Activated CD4-positive, alpha-beta memory T cell treated with anti-CD3 and anti-CD28 coated beads for 36 hours (primary cell): ENCODE measurements at regions of chr2 and their contacts with region 1.

Region 1: GRCh38 chr2:178112202-178113152 is at the start of gene RBM45:
- DNase-seq: peak; percentile 91
- H3K4me3 Mint-ChIP-seq: peak within 1 kb of the TSS; percentile 95
- H3K27ac Mint-ChIP-seq: peak within 1 kb of the TSS; percentile 74
- H3K4me1 Mint-ChIP-seq: peaks cover 36% of the 10 kb centered on the region
- H3K27me3 Mint-ChIP-seq: no peaks in the 10 kb centered on the region
- total RNA-seq, gene RBM45: 12.2 to 12.5 TPM

Region 2: GRCh38 chr2:177872286-177872685 is 240.2 kb before region 1 on chr2:
- CTCF ChIA-PET with region 1: no interaction called
- POLR2A ChIA-PET with region 1: no interaction called
- intact Hi-C with region 1: no loop called
- DNase-seq: no peak
- H3K4me3 Mint-ChIP-seq: no peak overlapping the region
- H3K27ac Mint-ChIP-seq: no peak overlapping the region
- H3K4me1 Mint-ChIP-seq: no peaks in the 10 kb centered on the region
- H3K27me3 Mint-ChIP-seq: no peaks in the 10 kb centered on the region

Region 3: DNA sequence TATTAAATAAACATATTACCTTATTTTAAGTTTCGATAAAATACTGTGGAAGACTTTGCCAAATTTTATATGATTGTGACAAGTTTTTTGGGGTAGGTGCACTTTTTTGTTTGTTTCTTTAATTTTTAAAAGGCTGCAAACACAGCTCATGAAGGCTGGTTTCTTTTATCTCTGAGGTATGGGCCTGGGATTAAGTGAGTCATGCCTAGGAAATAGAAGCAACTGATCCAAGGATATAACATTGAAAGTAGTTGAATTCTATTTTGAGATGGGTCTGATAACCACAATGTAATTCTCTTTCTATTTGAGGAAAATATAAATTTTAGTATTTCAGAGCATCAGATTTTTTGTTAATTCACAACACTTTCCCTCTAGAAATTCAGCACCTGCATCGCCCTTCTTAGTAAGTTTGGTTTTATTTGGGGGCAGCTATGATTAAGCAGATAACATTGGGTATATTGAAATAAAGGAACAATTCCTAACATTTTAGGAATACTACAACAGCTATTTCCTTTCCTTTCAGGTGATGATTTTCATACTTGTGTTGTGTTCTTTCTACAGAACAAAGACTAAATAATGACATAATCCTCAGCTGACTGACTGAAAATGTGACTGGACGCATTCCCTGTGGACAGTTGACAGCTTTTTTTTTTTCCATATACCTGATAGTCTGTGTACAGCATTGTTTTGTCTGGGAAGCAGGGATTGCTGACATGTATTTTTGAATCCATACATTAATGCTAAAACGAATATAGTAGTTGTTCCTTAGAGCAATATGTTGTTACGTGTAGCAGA is 16.6 kb after region 1 on chr2:
- CTCF ChIA-PET with region 1: interaction called, 14 read pairs
- POLR2A ChIA-PET with region 1: interaction called, 3 read pairs
- intact Hi-C with region 1: no loop called
- DNase-seq: no peak
- H3K4me3 Mint-ChIP-seq: no peak overlapping the region
- H3K27ac Mint-ChIP-seq: no peak overlapping the region
- H3K4me1 Mint-ChIP-seq: no peaks in the 10 kb centered on the region
- H3K27me3 Mint-ChIP-seq: no peaks in the 10 kb centered on the region

Region 4: DNA sequence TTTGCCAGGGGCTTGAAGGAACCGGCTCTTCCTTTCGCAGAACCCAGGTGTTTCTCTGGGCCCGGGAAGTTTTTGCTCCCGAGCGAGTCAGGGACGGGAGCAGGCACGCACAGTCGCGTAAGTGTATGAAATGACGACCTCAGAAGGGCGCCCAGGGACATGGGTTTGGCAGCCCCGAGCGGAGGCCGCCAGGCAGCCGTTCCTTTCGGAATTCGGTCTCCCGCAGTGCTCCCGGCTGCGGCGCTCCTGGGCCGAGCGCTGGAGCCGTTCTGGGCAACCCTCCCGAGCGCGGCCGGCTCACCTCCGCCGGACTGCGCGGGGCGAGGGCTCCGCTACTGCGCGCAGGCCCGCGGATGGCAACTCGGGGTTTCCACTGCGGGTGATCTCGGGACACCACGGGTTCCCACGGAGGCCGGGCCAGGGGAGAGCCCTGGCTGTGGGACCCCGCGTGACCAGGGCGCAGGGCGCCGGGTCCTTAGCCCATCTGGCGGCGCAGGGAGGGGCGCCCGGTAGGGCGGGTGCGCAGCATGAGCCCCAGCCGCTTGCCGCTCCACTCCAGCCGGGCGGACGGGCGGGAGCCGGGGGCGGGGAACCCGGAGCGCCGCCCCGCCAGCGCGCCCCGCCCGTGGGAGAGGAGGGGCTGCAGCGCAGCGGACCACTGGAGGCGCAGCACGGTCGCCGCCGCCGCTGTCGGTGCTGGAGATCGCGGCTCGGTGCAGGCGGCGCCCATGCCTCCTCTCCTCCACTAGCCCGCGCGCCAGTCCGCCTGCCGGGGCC is 81.5 kb after region 1 on chr2 and contains the start of gene OSBPL6:
- CTCF ChIA-PET with region 1: interaction called, 4 read pairs
- POLR2A ChIA-PET with region 1: no interaction called
- intact Hi-C with region 1: loop called (anchors 2 kb)
- DNase-seq: peak; percentile 74
- H3K4me3 Mint-ChIP-seq: peak within 1 kb of the TSS; percentile 66
- H3K27ac Mint-ChIP-seq: no peak within 1 kb of the TSS
- H3K4me1 Mint-ChIP-seq: peaks cover 9% of the 10 kb centered on the region
- H3K27me3 Mint-ChIP-seq: peaks cover 51% of the 10 kb centered on the region
- total RNA-seq, gene OSBPL6: 1.5 to 1.9 TPM

Region 5: DNA sequence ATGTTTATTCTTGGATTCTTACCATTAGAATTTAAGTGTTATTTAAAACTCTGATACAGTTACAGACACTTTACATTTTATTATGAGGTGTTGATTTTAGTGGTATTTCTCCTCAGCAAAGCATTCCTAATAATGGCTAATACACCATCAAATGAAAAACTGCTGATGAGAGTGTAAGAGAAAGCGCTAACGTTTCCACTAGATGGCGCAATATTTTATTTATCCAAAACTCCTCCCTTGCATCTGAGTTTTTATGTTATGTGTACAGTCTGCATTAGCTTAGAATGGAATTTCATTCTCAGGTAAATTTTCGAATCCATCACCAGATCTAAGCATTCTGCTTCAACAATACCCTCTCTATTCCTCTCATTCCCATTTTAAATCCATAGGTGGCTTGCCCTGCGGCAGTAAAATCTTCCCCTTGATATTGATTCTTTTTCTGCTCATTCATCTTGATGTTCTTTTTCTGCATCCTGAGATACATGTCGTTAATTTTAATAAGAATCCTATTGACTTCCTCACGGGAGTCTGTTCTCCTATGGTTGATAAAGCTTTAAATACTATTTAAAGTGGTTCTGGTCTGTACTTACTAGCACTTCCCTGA is 284.6 kb after region 1 on chr2:
- CTCF ChIA-PET with region 1: interaction called, 11 read pairs
- POLR2A ChIA-PET with region 1: no interaction called
- intact Hi-C with region 1: loop called (anchors 5 kb)
- DNase-seq: no peak
- H3K4me3 Mint-ChIP-seq: no peak overlapping the region
- H3K27ac Mint-ChIP-seq: no peak overlapping the region
- H3K4me1 Mint-ChIP-seq: no peaks in the 10 kb centered on the region
- H3K27me3 Mint-ChIP-seq: peaks cover 2% of the 10 kb centered on the region

Region 6: DNA sequence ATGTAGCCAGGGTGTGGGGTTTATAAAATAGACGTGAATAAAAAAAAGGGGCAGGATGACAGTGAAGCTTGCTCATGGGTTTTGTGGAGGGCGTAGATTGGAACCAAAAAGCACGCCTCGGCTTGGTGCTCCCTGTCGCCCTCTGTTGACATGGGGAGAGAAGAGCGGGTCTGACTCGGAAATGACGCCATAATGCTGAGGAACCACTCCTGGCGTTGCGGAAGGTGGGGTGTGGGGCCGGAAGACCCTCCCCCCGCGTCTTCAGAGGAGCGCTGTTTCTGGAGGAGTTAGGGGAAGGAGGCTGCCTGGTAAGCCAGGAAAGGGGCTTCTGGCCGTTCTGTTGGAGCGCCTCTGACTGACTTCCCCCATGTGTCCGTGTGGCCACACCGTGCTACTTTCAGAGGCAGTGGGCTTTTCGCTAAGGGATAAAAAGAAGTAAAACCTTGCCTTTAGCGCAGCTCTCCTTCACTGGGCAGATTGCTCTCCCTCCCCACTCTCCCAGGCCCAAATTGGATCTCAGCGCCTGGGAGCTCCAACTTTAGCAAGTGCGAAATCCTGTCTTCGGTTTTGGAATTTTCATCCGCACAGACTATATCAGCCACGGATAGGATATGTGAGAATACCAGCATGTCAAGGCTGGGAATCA is 410.6 kb after region 1 on chr2:
- CTCF ChIA-PET with region 1: no interaction called
- POLR2A ChIA-PET with region 1: no interaction called
- intact Hi-C with region 1: loop called (anchors 2 kb)
- DNase-seq: peak; percentile 92
- H3K4me3 Mint-ChIP-seq: peak overlapping the region; percentile 95
- H3K27ac Mint-ChIP-seq: peak overlapping the region; percentile 91
- H3K4me1 Mint-ChIP-seq: peaks cover 54% of the 10 kb centered on the region
- H3K27me3 Mint-ChIP-seq: no peaks in the 10 kb centered on the region